Common myeloid progenitor, CD34-positive (primary cell): ENCODE measurements at regions of chr4 and their contacts with region 1.

Region 1: DNA sequence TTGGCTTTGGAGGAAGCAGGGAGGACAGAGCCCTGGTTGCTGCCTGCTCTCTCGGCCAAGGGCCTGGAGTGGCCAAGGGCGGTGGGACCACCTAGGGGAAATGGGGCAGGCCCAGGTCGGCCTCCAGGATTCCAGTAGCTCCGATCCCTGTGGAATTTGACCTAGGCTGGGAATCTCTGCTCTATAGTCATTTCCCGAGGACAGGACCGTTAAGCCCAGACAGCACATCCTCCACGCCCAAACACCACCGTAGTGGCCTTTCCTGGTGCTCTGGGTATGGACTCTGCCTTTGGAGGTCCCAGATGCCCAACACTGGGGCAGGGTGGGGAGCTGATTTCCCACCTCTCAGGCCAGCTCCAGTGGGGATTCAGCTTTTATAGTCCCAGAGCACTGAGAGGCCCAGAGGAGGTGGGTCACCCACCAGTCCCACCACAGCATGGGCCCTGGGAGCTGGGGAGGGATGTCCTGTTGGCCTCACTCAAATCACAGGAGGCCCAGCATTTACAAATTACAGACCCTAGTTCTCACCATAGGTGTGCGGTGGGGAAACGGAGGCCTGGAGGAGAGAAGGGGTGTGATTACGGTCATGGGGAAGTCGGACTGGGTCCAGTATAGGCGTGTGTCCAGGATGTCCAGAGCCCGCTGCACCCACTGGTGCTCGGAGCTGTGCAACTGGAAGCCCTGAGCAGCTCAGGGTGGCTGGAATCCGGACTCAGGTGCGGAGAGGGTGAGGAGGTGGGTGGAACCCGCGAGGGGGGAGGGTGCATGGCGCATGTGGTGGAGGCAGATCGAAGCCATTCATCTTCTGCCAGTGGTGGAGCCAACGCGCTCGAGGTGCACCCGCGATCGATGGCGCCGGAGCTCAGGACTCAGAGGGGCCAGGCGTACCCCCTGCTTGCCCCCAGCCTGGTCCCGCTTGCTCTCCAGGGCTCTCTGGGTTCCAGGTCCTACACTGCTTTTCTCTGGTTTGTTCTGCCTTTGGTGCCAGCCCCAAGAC is 7.7 kb downstream of the HMX1 start:
- DNase-seq: no peak
- H3K4me3 ChIP-seq: no peak overlapping the region
- H3K27ac ChIP-seq: no peak overlapping the region
- H3K4me1 ChIP-seq: peaks cover 0 to 15% (median 6%) of the 10 kb centered on the region in 4 experiments
- H3K27me3 ChIP-seq: peaks cover 0 to 99% (median 67%) of the 10 kb centered on the region in 5 experiments

Region 2: GRCh38 chr4:8571702-8572596 is 292.0 kb before region 1 on chr4:
- CTCF ChIA-PET with region 1: no interaction called
- POLR2A ChIA-PET with region 1: interaction called, 10 read pairs
- DNase-seq: no peak
- H3K4me3 ChIP-seq: no peak overlapping the region
- H3K27ac ChIP-seq: no peak overlapping the region
- H3K4me1 ChIP-seq: no peaks in the 10 kb centered on the region
- H3K27me3 ChIP-seq: peaks cover 0 to 20% (median 7%) of the 10 kb centered on the region in 5 experiments